ENCODE measurements at regions of chr11 and their contacts with region 1.

Region 1: DNA sequence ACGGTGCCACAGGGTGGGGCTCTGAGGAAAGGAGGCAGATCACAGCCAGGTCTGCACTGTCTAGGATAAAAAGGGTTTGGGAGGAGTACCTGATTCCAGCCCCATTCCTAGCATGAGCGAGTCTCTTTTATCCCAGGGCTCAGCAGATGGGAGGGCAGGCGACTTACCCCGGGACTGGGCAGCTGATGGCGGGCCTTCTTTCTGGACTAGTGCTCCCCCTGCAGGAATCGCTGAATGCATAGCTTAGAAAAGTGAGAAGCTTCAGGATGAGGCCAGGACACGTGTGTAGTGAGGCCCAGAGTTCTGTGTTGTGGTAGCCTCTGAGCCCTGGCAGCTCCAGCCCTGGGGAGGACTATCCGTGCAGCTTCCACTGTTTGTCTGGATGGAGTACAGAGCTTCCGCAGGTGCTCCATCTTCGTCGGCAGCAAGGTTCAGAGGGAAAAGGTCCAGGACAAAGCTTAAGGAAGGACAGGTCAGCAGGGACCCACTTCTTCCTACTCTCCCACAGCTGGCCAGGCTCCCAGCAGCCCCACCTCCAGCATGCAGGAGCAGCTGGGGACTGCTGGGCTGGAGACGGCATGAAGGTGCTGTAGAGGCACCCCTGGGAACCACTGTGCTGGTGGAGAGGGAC is 30.4 kb downstream of the COMMD9 start:
- DNase-seq: peak; percentile 69
- H3K4me3 ChIP-seq: no peak overlapping the region
- H3K27ac ChIP-seq: no peak overlapping the region
- H3K4me1 ChIP-seq: no peaks in the 10 kb centered on the region
- H3K27me3 ChIP-seq: peaks cover 0 to 2% of the 10 kb centered on the region in 2 experiments
- CTCF ChIP-seq: peak; percentile 80 to 86
- POLR2A ChIP-seq: no peak

Region 2: DNA sequence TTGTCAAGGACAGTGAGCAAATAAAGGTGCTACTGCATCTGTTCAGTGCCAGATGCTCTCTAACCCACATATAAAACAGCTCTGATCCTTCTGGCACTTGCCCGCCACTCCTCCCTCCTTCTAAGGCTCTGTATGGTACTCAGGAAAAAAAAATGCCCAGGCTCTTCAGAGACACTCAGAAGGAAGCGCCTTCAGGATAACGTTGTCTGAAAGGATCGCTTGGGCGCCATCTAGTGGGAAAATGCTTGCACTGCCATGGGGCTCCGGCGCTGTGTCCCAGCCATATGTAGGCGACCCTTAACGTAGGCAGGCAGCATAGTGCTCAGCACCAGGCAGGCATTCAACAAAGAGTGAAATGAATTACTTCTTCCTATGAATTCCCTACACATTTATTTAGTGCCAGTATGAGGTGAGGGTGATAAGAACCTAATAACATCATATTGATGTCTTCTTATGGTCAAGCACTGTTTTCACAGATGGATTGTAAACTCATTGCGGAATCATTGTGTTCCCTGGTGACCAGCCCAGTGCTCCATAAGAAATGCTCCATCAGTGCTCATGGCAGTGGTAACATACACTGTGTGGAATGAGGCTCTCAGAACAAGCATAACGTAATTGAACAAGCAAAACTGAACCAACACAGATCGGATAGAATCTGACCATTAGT is 773.1 kb before region 1 on chr11:
- CTCF ChIA-PET with region 1: interaction called, 12 read pairs
- POLR2A ChIA-PET with region 1: no interaction called
- dilution Hi-C with region 1: no loop called
- intact Hi-C with region 1: loop called (anchors 2 kb)
- DNase-seq: peak; percentile 79
- H3K4me3 ChIP-seq: no peak overlapping the region
- H3K27ac ChIP-seq: no peak overlapping the region
- H3K4me1 ChIP-seq: no peaks in the 10 kb centered on the region
- H3K27me3 ChIP-seq: peaks cover 8 to 10% of the 10 kb centered on the region in 2 experiments
- CTCF ChIP-seq: peak; percentile 85 to 92
- POLR2A ChIP-seq: no peak

Region 3: GRCh38 chr11:35794850-35795249 is 464.0 kb before region 1 on chr11:
- CTCF ChIA-PET with region 1: interaction called, 15 read pairs
- POLR2A ChIA-PET with region 1: no interaction called
- dilution Hi-C with region 1: loop called (anchors 25 kb)
- intact Hi-C with region 1: no loop called
- DNase-seq: no peak
- H3K4me3 ChIP-seq: no peak overlapping the region
- H3K27ac ChIP-seq: no peak overlapping the region
- H3K4me1 ChIP-seq: peaks cover 45% of the 10 kb centered on the region
- H3K27me3 ChIP-seq: no peaks in the 10 kb centered on the region
- CTCF ChIP-seq: no peak
- POLR2A ChIP-seq: no peak

Region 4: GRCh38 chr11:36041988-36042611 is 216.7 kb before region 1 on chr11:
- CTCF ChIA-PET with region 1: interaction called, 68 read pairs
- POLR2A ChIA-PET with region 1: no interaction called
- dilution Hi-C with region 1: no loop called
- intact Hi-C with region 1: loop called (anchors 1 kb)
- DNase-seq: peak; percentile 29
- H3K4me3 ChIP-seq: no peak overlapping the region
- H3K27ac ChIP-seq: no peak overlapping the region
- H3K4me1 ChIP-seq: no peaks in the 10 kb centered on the region
- H3K27me3 ChIP-seq: no peaks in the 10 kb centered on the region
- CTCF ChIP-seq: peak; percentile 44 to 45
- POLR2A ChIP-seq: no peak

Region 5: DNA sequence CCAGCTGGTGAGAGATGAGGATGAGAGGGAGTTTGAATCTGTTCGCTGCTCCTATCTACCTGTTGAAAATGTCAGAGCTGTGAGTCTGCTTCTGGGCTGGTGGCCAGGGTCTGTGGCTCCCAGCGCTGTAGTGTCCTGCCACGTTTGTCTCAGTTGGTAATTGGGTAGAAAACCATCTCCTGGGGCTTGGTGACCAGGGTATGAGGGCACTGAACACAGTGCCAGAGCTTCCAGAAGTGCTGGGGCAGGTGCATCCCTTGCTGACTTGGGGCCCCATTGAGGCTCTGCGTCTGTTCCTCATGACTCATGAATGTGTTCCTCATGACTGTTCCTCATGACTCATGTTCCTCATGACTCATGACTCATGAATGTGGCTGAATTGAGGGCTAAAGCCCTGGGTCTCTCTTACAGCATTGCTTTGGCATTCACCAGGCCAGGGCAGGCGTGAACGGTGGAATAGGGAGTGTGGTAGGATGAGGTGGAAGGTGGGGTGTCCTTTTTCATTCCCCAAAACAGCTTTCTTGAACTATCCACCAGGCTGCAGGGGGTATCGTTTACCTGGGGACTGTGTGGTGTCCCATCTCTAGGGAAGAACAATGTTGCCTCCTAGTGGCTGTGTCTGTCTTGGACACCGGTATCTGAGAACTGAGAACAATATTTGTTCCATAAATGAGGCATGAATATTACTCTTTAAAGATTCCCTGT is 109.2 kb before region 1 on chr11:
- CTCF ChIA-PET with region 1: interaction called, 38 read pairs
- POLR2A ChIA-PET with region 1: no interaction called
- dilution Hi-C with region 1: no loop called
- intact Hi-C with region 1: no loop called
- DNase-seq: peak; percentile 99
- H3K4me3 ChIP-seq: no peak overlapping the region
- H3K27ac ChIP-seq: peak overlapping the region; percentile 93
- H3K4me1 ChIP-seq: peaks cover 25% of the 10 kb centered on the region
- H3K27me3 ChIP-seq: no peaks in the 10 kb centered on the region
- CTCF ChIP-seq: peak; percentile 43 to 50
- POLR2A ChIP-seq: peak; percentile 64

Region 6: DNA sequence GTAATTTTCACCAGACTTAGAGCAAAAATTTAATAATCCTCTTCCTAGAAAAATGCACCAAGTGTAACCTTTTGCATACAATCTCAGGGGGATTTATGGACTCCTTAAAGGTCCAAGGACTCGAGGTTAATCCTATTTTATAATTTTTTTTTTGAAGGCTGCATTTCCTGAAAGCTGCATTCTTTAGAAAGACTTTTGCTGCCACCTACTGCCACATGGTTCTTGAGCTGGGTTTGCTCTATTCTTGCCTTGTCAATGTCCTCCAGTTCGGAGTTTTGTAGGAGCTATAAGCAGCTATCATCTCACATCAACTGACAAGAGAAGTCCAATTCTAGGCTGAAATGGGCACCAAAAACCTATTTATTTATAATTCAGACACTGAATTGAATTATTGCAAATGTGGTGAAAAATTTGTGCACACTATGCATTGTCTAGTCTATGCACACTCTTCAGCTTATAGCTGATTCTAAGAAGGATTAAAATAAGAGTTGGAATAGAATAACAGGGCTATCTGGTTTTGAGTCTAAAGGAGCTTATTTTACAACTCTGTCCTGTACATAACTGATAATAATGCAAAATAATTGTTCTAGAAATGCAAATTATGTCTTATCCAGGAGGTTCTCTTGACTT is 220.0 kb after region 1 on chr11:
- CTCF ChIA-PET with region 1: interaction called, 13 read pairs
- POLR2A ChIA-PET with region 1: no interaction called
- dilution Hi-C with region 1: no loop called
- intact Hi-C with region 1: no loop called
- DNase-seq: peak; percentile 60
- H3K4me3 ChIP-seq: no peak overlapping the region
- H3K27ac ChIP-seq: no peak overlapping the region
- H3K4me1 ChIP-seq: no peaks in the 10 kb centered on the region
- H3K27me3 ChIP-seq: no peaks in the 10 kb centered on the region
- CTCF ChIP-seq: peak; percentile 47 to 50
- POLR2A ChIP-seq: no peak